ENCODE measurements at regions of chr3 and their contacts with region 1.

Region 1: DNA sequence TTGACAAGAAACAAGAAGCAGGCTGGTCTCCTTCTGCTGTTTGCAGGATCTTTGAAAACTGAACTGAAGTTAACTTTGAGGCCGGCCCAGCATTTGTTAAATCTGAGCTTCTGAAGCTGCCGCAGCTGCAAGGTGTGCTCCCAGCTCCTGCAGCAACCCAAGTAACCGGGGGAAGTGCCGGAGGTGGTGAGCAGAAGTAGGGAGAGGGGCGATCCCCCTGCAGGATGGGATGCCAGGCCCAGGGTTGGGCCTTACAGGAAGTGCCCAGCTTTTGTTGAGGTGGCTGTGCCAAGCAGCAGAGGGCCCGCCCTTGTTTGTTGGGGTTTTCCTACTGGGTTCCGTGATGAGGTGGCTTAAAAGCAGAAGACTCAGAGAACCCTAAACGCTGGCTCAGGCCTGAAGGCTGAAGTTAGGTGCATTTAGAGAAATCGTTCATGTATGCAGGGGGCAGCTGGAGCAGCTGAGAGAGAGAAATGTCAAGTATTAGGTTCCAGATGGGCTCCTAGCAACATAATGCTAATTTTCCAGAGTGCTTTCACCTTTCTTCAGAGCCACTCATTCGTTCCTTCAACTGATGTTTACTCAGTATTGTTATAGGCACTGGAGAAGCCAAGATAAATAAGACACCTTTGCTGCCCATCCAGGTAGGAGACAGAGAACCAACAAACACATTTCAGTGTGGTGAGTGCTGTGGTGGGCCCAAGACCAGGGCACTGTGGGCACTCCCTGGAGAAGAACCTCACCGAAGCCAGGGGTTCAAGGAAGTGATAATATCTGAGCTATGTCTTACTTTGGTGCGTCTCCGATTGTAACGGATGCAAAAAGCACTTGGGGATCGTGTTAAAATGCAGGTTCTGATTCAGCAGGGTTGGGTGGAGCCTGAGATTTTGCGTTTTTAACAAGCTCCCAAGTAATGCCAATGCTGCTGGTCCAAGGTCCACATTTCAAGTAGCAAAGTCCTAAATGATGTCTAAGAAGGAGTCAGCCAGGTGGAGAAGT is 42.2 kb upstream of the PLCL2 start:
- DNase-seq: no peak
- ATAC-seq: no peak
- H3K4me3 ChIP-seq: no peak overlapping the region
- H3K27ac ChIP-seq: no peak overlapping the region
- H3K4me1 ChIP-seq: no peaks in the 10 kb centered on the region; the same call in 1 of the 2 replicates
- H3K27me3 ChIP-seq: no peaks in the 10 kb centered on the region
- CTCF ChIP-seq: no peak

Region 2: DNA sequence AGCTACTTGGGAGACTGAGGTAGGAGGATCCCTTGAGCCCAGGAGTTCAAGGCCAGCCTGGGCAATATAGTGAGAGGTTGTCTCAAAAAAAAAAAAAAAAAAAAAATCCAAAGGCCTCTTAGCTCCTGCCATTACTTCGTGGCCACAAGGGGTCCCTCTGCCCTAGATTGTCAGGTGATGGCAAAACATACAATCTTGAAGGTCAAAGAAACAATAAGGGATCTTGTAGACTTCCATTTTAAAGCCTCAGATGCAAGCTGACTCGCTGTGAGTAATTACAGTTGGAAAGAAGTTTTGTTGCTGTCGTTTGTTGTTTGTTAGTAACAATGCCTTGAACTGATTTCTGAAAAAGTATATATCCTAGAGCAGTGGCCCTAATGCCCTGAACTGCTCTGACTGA is 13.8 kb before region 1 on chr3:
- CTCF ChIA-PET with region 1: interaction called, 11 read pairs
- POLR2A ChIA-PET with region 1: no interaction called
- in situ Hi-C with region 1: no loop called
- intact Hi-C with region 1: no loop called
- DNase-seq: no peak
- ATAC-seq: no peak
- H3K4me3 ChIP-seq: no peak overlapping the region
- H3K27ac ChIP-seq: no peak overlapping the region
- H3K4me1 ChIP-seq: no peaks in the 10 kb centered on the region
- H3K27me3 ChIP-seq: no peaks in the 10 kb centered on the region
- CTCF ChIP-seq: peak; percentile 31; the same call in 1 of the 2 replicates